ENCODE measurements at regions of chrX and their contacts with region 1.

Region 1: GRCh38 chrX:149962859-149963757 is 24.8 kb upstream of the EOLA2 start:
- DNase-seq: peak; percentile 51 to 69
- ATAC-seq: peak; percentile 100
- H3K4me3 ChIP-seq: no peak overlapping the region
- H3K27ac ChIP-seq: peak overlapping the region in 1 of 2 experiments; percentile 66; a peak in 3 of 6 replicates
- H3K4me1 ChIP-seq: peaks cover 19% of the 10 kb centered on the region; the same call in 2 of the 3 replicates
- CTCF ChIP-seq: peak; percentile 80
- EP300 ChIP-seq: no peak
- POLR2A ChIP-seq: no peak
- RAD21 ChIP-seq: peak; percentile 90 to 93

Region 2: GRCh38 chrX:149950681-149951080 is 12.4 kb before region 1 on chrX:
- CTCF ChIA-PET with region 1: interaction called, 13 read pairs
- POLR2A ChIA-PET with region 1: no interaction called
- DNase-seq: peak; percentile 40 to 55
- ATAC-seq: peak; percentile 63 to 82; a peak in 4 of 6 replicates
- H3K4me3 ChIP-seq: no peak overlapping the region
- H3K27ac ChIP-seq: no peak overlapping the region
- H3K4me1 ChIP-seq: no peaks in the 10 kb centered on the region
- CTCF ChIP-seq: peak; percentile 61
- EP300 ChIP-seq: no peak
- POLR2A ChIP-seq: no peak
- RAD21 ChIP-seq: peak; percentile 54 to 64